CD4-positive, alpha-beta memory T cell (primary cell): ENCODE measurements at regions of chr11 and their contacts with region 1.

Region 1: GRCh38 chr11:102396708-102397563 is 49.9 kb downstream of the BIRC2 start:
- DNase-seq: no peak
- H3K4me3 ChIP-seq: no peak overlapping the region
- H3K4me3 Mint-ChIP-seq: peak overlapping the region in 2 of 8 donors; percentile 26 to 43
- H3K27ac ChIP-seq: no peak overlapping the region
- H3K27ac Mint-ChIP-seq: peak overlapping the region; percentile 57 to 89 (median 80)
- H3K4me1 ChIP-seq: peaks cover 30% of the 10 kb centered on the region
- H3K4me1 Mint-ChIP-seq: peaks cover 24 to 44% (median 36%) of the 10 kb centered on the region in 4 donors
- H3K27me3 ChIP-seq: no peaks in the 10 kb centered on the region
- H3K27me3 Mint-ChIP-seq: no peaks in the 10 kb centered on the region

Region 2: DNA sequence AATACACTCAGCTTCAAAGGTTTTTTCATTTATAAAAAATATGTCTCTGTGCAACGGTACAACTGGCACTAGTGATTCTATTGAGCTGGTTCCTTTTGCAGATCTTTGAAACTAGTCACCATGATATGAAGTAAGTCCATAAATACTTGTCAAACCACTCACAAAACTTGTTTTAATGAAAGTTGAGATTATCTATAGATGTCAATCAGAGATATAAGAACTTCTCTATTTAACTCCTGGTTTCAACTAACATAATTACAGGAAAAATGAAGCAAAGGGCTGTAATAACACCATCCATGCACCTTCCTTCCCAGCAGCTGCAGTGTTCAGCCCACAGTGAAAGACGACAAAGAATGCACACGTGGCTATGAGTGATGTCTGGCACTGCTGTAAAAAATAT is 11.0 kb after region 1 on chr11:
- CTCF ChIA-PET with region 1: interaction called, 53 read pairs
- POLR2A ChIA-PET with region 1: interaction called, 3 read pairs
- intact Hi-C with region 1: no loop called
- DNase-seq: no peak
- H3K4me3 ChIP-seq: no peak overlapping the region
- H3K4me3 Mint-ChIP-seq: peak overlapping the region in 4 of 8 donors; percentile 7 to 23 (median 17)
- H3K27ac ChIP-seq: peak overlapping the region; percentile 7
- H3K27ac Mint-ChIP-seq: peak overlapping the region in 6 of 7 donors; percentile 25 to 91 (median 56)
- H3K4me1 ChIP-seq: peaks cover 83% of the 10 kb centered on the region
- H3K4me1 Mint-ChIP-seq: peaks cover 58 to 85% (median 70%) of the 10 kb centered on the region in 4 donors
- H3K27me3 ChIP-seq: no peaks in the 10 kb centered on the region
- H3K27me3 Mint-ChIP-seq: no peaks in the 10 kb centered on the region

Region 3: DNA sequence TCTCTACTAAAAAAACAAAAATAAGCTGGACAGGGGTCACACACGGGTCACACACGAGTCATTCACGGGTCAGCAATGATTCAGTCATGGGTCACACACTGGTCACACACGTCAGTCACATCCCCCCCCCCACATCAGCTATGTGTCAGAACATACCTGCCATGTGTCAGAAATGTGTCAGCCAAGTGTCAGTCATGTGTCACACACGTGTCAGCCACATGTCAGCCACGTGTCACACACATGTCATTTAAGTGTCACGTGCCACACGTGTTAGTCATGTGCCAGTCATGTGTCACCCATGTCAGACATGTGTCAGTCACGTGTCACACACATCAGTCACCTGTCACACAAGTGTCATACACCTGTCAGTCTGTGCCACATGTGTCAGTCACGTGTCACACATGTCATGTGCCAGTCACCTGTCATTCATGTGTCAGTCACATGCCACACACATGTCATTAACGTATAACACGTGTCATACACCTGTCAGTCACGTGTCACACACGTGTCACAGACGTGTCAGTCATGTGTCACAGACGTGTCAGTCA is 256.9 kb after region 1 on chr11:
- CTCF ChIA-PET with region 1: no interaction called
- POLR2A ChIA-PET with region 1: no interaction called
- intact Hi-C with region 1: no loop called
- DNase-seq: no peak
- H3K4me3 ChIP-seq: no peak overlapping the region
- H3K4me3 Mint-ChIP-seq: no peak overlapping the region
- H3K27ac ChIP-seq: no peak overlapping the region
- H3K27ac Mint-ChIP-seq: no peak overlapping the region
- H3K4me1 ChIP-seq: no peaks in the 10 kb centered on the region
- H3K4me1 Mint-ChIP-seq: no peaks in the 10 kb centered on the region
- H3K27me3 ChIP-seq: no peaks in the 10 kb centered on the region
- H3K27me3 Mint-ChIP-seq: peaks cover 8 to 11% of the 10 kb centered on the region in 2 donors